ENCODE measurements at regions of chr9 and their contacts with region 1.

Region 1: GRCh38 chr9:91193658-91194391 is 167.9 kb downstream of the AUH start:
- DNase-seq: peak; percentile 69 to 75
- ATAC-seq: peak; percentile 45 to 76 (median 74)
- H3K4me3 ChIP-seq: peak overlapping the region; percentile 44
- H3K4me3 Mint-ChIP-seq: peak overlapping the region; percentile 92
- H3K27ac ChIP-seq: peak overlapping the region; percentile 81
- H3K27ac Mint-ChIP-seq: peak overlapping the region; percentile 95 to 98
- H3K4me1 ChIP-seq: peaks cover 48% of the 10 kb centered on the region
- H3K4me1 Mint-ChIP-seq: peaks cover 55 to 61% of the 10 kb centered on the region in 2 donors
- H3K27me3 ChIP-seq: no peaks in the 10 kb centered on the region
- H3K27me3 Mint-ChIP-seq: no peaks in the 10 kb centered on the region
- CTCF ChIP-seq: no peak

Region 2: GRCh38 chr9:91164724-91165520 is 28.9 kb before region 1 on chr9:
- intact Hi-C with region 1: loop called (anchors 1 kb)
- DNase-seq: peak; percentile 68 to 75
- ATAC-seq: peak; percentile 77 to 89 (median 78)
- H3K4me3 ChIP-seq: no peak overlapping the region
- H3K4me3 Mint-ChIP-seq: peak overlapping the region; percentile 87
- H3K27ac ChIP-seq: peak overlapping the region; percentile 78
- H3K27ac Mint-ChIP-seq: peak overlapping the region; percentile 93 to 94
- H3K4me1 ChIP-seq: peaks cover 62% of the 10 kb centered on the region
- H3K4me1 Mint-ChIP-seq: peaks cover 44 to 46% of the 10 kb centered on the region in 2 donors
- H3K27me3 ChIP-seq: no peaks in the 10 kb centered on the region
- H3K27me3 Mint-ChIP-seq: no peaks in the 10 kb centered on the region
- CTCF ChIP-seq: no peak

Region 3: GRCh38 chr9:91207729-91208418 is 14.0 kb after region 1 on chr9:
- intact Hi-C with region 1: loop called (anchors 2 kb)
- DNase-seq: peak in 1 of 2 donors; percentile 44
- ATAC-seq: peak; percentile 54 to 69 (median 58)
- H3K4me3 ChIP-seq: no peak overlapping the region
- H3K4me3 Mint-ChIP-seq: peak overlapping the region; percentile 67
- H3K27ac ChIP-seq: peak overlapping the region; percentile 56
- H3K27ac Mint-ChIP-seq: peak overlapping the region; percentile 75 to 88
- H3K4me1 ChIP-seq: peaks cover 29% of the 10 kb centered on the region
- H3K4me1 Mint-ChIP-seq: peaks cover 42 to 47% of the 10 kb centered on the region in 2 donors
- H3K27me3 ChIP-seq: no peaks in the 10 kb centered on the region
- H3K27me3 Mint-ChIP-seq: no peaks in the 10 kb centered on the region
- CTCF ChIP-seq: no peak

Measured in natural killer cell (primary cell).